ENCODE measurements at regions of chr10 and their contacts with region 1.

Region 1: DNA sequence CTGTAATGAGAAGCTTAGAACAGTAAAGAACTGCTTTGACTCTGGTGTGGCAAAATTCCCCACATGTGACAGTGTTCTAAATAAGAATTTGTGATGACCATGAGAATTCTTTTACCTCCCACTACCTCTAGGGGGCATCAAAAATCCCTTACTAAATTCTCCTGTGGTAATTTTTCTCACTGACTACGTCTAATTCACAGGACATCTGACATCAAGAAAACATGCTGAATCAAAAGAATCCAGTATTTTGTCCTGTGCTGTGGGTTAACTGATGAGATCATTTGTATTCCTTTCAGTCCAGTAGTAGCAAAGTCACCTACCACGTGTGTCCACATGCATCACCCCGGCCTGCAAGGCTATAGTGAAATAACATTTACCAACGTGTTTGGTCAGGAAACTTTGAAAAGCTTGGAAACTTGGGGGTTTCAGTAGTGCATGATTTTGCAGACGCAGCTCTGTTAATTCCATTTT is 103.8 kb downstream of the ATE1 start:
- DNase-seq: peak; percentile 47
- H3K4me3 ChIP-seq: peak overlapping the region in 1 of 2 experiments; percentile 27; a peak in 1 of 4 replicates
- H3K27ac ChIP-seq: no peak overlapping the region
- H3K4me1 ChIP-seq: no peaks in the 10 kb centered on the region
- H3K27me3 ChIP-seq: no peaks in the 10 kb centered on the region
- CTCF ChIP-seq: peak; percentile 82
- EP300 ChIP-seq: no peak
- RAD21 ChIP-seq: peak; percentile 54

Region 2: GRCh38 chr10:121753726-121754476 is 70.1 kb before region 1 on chr10:
- CTCF ChIA-PET with region 1: no interaction called
- POLR2A ChIA-PET with region 1: no interaction called
- DNase-seq: peak; percentile 44
- H3K4me3 ChIP-seq: peak overlapping the region in 1 of 2 experiments; percentile 5; a peak in 1 of 4 replicates
- H3K27ac ChIP-seq: peak overlapping the region; percentile 29 to 89; a peak in 3 of 4 replicates
- H3K4me1 ChIP-seq: peaks cover 0 to 12% of the 10 kb centered on the region in 2 experiments; a peak in 1 of 4 replicates
- H3K27me3 ChIP-seq: no peaks in the 10 kb centered on the region
- CTCF ChIP-seq: peak; percentile 64
- EP300 ChIP-seq: no peak
- RAD21 ChIP-seq: peak; percentile 54

Region 3: DNA sequence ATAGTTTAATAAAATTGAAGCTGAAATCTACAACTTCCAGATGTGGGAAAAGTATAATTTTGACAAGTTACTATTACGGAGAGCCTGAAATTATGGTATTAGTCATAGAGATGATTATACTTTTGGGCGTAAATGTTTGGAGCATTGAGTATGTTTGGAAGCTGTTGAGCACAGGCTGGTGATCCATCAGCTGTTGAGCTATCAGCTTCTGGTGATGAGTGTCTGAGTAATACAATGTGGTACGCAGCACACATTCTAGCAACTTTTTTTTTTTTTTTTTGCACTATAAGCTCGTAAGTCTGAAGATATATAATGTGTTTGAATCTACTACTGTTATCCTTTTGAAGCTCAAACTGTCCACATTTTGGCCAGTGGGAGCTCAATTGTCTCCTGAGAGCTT is 19.6 kb before region 1 on chr10:
- CTCF ChIA-PET with region 1: interaction called, 23 read pairs
- POLR2A ChIA-PET with region 1: no interaction called
- DNase-seq: no peak
- H3K4me3 ChIP-seq: no peak overlapping the region
- H3K27ac ChIP-seq: no peak overlapping the region
- H3K4me1 ChIP-seq: peaks cover 0 to 4% of the 10 kb centered on the region in 2 experiments; a peak in 2 of 4 replicates
- H3K27me3 ChIP-seq: no peaks in the 10 kb centered on the region
- CTCF ChIP-seq: no peak
- EP300 ChIP-seq: no peak
- RAD21 ChIP-seq: no peak

Region 4: DNA sequence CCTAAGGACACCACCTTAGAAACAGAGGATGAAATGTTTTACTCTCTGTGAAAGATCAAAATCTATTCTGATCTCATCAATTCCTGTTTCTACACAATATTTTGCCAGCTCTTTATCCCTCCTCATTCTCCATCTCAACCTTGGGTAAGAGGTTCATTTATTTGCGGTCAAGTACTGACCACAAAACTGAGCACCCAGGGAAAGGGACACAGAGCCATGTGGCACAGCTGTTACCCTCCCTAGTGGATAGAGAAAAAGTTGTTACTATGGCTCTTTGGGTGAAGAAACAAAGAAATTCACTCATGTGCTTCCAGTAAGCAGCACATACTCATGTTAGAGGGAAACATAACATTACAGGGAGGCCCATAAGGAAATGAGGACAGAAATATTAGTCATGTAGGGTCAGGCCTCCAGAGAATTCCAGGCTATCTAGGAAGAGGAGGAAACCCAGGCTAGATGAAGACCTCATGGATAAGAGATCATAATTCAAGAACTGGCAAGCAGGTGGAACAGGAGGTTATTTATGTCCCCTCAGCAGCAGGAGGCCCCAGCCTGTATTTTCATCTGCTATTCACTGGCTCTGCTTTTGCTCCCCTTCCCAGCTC is 10.7 kb before region 1 on chr10:
- CTCF ChIA-PET with region 1: interaction called, 15 read pairs
- POLR2A ChIA-PET with region 1: no interaction called
- DNase-seq: no peak
- H3K4me3 ChIP-seq: no peak overlapping the region
- H3K27ac ChIP-seq: no peak overlapping the region
- H3K4me1 ChIP-seq: peaks cover 0 to 3% of the 10 kb centered on the region in 2 experiments; a peak in 2 of 4 replicates
- H3K27me3 ChIP-seq: no peaks in the 10 kb centered on the region
- CTCF ChIP-seq: no peak
- EP300 ChIP-seq: no peak
- RAD21 ChIP-seq: no peak

Region 5: DNA sequence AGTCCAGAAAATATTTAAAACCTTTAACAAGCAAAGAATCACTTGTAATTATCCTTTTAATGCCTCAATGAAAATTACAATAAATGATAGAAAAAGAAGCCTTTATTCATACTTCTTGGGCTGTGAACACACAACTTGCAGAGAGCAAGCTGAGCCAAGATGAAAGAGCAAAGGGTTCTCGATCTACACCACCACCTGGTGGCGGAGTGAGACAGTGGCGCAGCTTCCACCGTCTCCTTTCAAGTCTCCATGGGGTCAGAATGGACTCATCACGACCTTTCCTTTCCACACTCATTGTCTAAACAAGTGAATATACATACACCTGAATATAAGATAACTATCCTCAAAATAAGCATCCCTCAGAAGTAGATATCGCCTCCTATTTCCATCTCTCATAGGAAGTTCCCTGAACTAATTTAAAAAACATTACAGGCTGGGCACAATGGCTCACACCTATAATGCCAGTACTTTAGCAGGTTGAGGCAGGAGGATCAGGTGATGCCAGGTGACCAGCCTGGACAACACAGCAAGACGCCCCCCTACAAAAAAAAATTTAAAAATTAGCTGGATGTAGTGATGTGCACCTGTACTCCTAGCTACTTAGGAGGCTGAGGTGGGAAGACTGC is 63.1 kb after region 1 on chr10:
- CTCF ChIA-PET with region 1: interaction called, 24 read pairs
- POLR2A ChIA-PET with region 1: no interaction called
- DNase-seq: peak; percentile 69
- H3K4me3 ChIP-seq: no peak overlapping the region; a peak in 1 of 4 replicates
- H3K27ac ChIP-seq: no peak overlapping the region
- H3K4me1 ChIP-seq: peaks cover 0 to 3% of the 10 kb centered on the region in 2 experiments; a peak in 1 of 4 replicates
- H3K27me3 ChIP-seq: no peaks in the 10 kb centered on the region
- CTCF ChIP-seq: peak; percentile 70
- EP300 ChIP-seq: no peak
- RAD21 ChIP-seq: peak; percentile 75